Activated CD8-positive, alpha-beta memory T cell treated with anti-CD3 and anti-CD28 coated beads, Interleukin-2, amount 10 ng/mL, durations not matched to agents 7 days and 5 days (primary cell): ENCODE measurements at regions of chr5 and their contacts with region 1.

Region 1: GRCh38 chr5:150363185-150363584 is 5.7 kb downstream of the TCOF1 start:
- DNase-seq: no peak
- ATAC-seq: no peak
- H3K4me3 Mint-ChIP-seq: no peak overlapping the region
- H3K27ac Mint-ChIP-seq: peak overlapping the region; percentile 38
- H3K4me1 Mint-ChIP-seq: peaks cover 36% of the 10 kb centered on the region
- H3K27me3 Mint-ChIP-seq: no peaks in the 10 kb centered on the region

Region 2: GRCh38 chr5:150350524-150351344 is 12.5 kb before region 1 on chr5:
- CTCF ChIA-PET with region 1: interaction called, 16 read pairs
- DNase-seq: peak; percentile 80
- ATAC-seq: peak; percentile 93
- H3K4me3 Mint-ChIP-seq: no peak overlapping the region
- H3K27ac Mint-ChIP-seq: peak overlapping the region; percentile 58
- H3K4me1 Mint-ChIP-seq: peaks cover 28% of the 10 kb centered on the region
- H3K27me3 Mint-ChIP-seq: peaks cover 4% of the 10 kb centered on the region